IMR-90 (cell line): ENCODE measurements at regions of chr3 and their contacts with region 1.

Region 1: GRCh38 chr3:134406331-134407238 is 32.3 kb upstream of the AMOTL2 start:
- DNase-seq: no peak
- ATAC-seq: peak; percentile 63
- H3K4me3 ChIP-seq: peak overlapping the region; percentile 16; the same call in 1 of the 2 replicates
- H3K27ac ChIP-seq: no peak overlapping the region
- H3K4me1 ChIP-seq: peaks cover 3% of the 10 kb centered on the region; the same call in 1 of the 2 replicates
- H3K27me3 ChIP-seq: peaks cover 6% of the 10 kb centered on the region
- CTCF ChIP-seq: no peak
- POLR2A ChIP-seq: no peak
- RAD21 ChIP-seq: no peak

Region 2: GRCh38 chr3:134387293-134387692 is 19.3 kb before region 1 on chr3:
- CTCF ChIA-PET with region 1: interaction called, 3 read pairs
- POLR2A ChIA-PET with region 1: no interaction called
- dilution Hi-C with region 1: no loop called
- in situ Hi-C with region 1: no loop called
- intact Hi-C with region 1: loop called (anchors 2 kb)
- DNase-seq: no peak
- ATAC-seq: no peak
- H3K4me3 ChIP-seq: no peak overlapping the region
- H3K27ac ChIP-seq: no peak overlapping the region
- H3K4me1 ChIP-seq: peaks cover 3% of the 10 kb centered on the region; the same call in 1 of the 2 replicates
- H3K27me3 ChIP-seq: no peaks in the 10 kb centered on the region; the same call in 1 of the 2 replicates
- CTCF ChIP-seq: no peak
- POLR2A ChIP-seq: no peak
- RAD21 ChIP-seq: no peak

Region 3: GRCh38 chr3:134449277-134449676 is 42.7 kb after region 1 on chr3:
- CTCF ChIA-PET with region 1: no interaction called
- POLR2A ChIA-PET with region 1: no interaction called
- dilution Hi-C with region 1: no loop called
- in situ Hi-C with region 1: no loop called
- intact Hi-C with region 1: loop called (anchors 1 kb)
- DNase-seq: peak; percentile 45
- ATAC-seq: peak; percentile 57
- H3K4me3 ChIP-seq: no peak overlapping the region
- H3K27ac ChIP-seq: no peak overlapping the region
- H3K4me1 ChIP-seq: peaks cover 18% of the 10 kb centered on the region
- H3K27me3 ChIP-seq: no peaks in the 10 kb centered on the region
- CTCF ChIP-seq: peak; percentile 53
- POLR2A ChIP-seq: no peak
- RAD21 ChIP-seq: peak; percentile 56

Region 4: GRCh38 chr3:134650431-134651346 is 244.1 kb after region 1 on chr3 and contains the start of gene KY:
- CTCF ChIA-PET with region 1: no interaction called
- POLR2A ChIA-PET with region 1: no interaction called
- dilution Hi-C with region 1: no loop called
- in situ Hi-C with region 1: no loop called
- intact Hi-C with region 1: no loop called
- DNase-seq: peak; percentile 26
- ATAC-seq: peak; percentile 86
- H3K4me3 ChIP-seq: peak within 1 kb of the TSS; percentile 43
- H3K27ac ChIP-seq: no peak within 1 kb of the TSS
- H3K4me1 ChIP-seq: no peaks in the 10 kb centered on the region
- H3K27me3 ChIP-seq: peaks cover 24% of the 10 kb centered on the region
- CTCF ChIP-seq: peak; percentile 28
- POLR2A ChIP-seq: no peak
- RAD21 ChIP-seq: no peak
- total RNA-seq, gene KY: under 0.01 TPM in 2 replicates